OCI-LY7 (cell line): ENCODE measurements at regions of chr20 and their contacts with region 1.

Region 1: DNA sequence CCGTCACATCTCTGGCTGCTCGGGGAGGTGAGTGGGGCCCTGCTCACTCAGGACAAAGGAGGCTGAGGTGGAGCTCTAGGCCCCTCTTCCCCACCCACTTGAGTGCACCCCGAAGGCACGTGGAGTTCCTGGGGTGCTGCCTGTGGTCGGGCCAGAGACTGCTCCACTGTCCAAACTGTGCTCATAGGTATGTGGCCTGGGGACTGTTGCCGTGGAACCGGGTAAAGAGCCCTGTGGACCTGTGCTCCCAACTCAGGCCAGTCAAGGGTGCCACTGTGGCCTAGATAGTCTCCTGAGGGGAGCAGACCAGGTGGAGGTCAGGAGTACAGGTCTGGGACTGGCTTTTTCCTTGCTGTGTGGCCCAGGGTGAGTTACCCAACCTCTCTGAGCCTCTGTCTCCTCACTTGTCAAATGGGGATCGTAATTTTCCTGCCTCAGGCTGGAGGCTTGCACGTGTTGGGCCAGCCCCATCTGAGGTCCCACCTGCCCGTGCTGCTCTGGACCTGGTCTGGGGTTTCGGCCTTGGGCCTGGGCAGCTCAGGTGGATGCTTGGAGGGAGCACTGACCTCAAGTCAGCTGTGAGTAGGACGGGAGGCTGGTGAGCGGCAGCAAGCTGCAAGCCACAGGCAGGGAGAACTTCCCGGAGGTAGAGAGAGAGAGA is 12.4 kb upstream of the NPBWR2 start:
- DNase-seq: peak; percentile 16
- H3K4me3 ChIP-seq: peak overlapping the region; percentile 29
- H3K27ac ChIP-seq: peak overlapping the region; percentile 9
- H3K4me1 ChIP-seq: peaks cover 11% of the 10 kb centered on the region
- CTCF ChIP-seq: no peak

Region 2: GRCh38 chr20:63980806-63981728 is 138.7 kb before region 1 on chr20 and contains the start of gene PRPF6:
- CTCF ChIA-PET with region 1: interaction called, 3 read pairs
- POLR2A ChIA-PET with region 1: no interaction called
- intact Hi-C with region 1: loop called (anchors 1 kb)
- DNase-seq: peak; percentile 99
- H3K4me3 ChIP-seq: peak within 1 kb of the TSS; percentile 82
- H3K27ac ChIP-seq: peak within 1 kb of the TSS; percentile 89
- H3K4me1 ChIP-seq: peaks cover 35% of the 10 kb centered on the region
- CTCF ChIP-seq: peak; percentile 86
- total RNA-seq, gene PRPF6: 45.1 and 61.5 TPM in 2 replicates

Region 3: DNA sequence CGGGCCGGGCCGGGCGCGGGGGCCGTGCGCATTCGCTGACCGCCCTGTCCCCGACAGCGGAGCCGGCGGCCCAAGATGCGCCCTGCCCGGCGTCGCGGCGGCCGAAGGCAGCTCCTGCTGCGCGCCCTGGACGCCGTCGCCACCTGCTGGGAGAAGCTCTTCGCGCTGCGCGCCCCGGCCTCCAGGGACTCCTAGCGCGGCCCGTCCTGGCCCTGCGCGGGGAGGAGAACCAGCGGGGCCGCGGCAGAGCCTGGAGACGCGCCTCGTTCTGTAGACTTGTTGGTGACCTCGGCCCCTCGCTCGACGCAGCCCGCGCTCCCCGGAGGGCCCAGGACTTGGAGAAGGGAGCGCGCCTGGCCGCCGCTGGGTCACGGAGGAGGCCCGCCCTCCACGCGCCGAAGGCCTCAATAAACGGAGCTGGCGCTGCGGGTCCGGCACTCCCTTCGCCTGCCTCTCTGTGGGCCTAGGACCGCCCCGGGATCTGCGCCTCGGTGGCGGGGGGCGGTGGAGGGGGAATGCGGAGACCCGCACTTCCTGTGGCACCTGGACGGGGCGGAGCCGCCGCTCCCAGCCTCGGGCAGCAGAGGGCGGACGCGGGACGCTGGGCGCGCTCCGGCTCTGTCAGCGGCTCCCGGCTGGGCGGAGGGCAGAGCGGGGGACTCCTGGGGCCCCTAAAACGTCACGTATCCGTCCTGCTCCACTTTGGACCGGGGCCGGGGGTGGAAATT is 81.1 kb before region 1 on chr20:
- CTCF ChIA-PET with region 1: interaction called, 3 read pairs
- POLR2A ChIA-PET with region 1: no interaction called
- intact Hi-C with region 1: loop called (anchors 1 kb)
- DNase-seq: peak; percentile 80
- H3K4me3 ChIP-seq: peak overlapping the region; percentile 63
- H3K27ac ChIP-seq: no peak overlapping the region
- H3K4me1 ChIP-seq: peaks cover 45% of the 10 kb centered on the region
- CTCF ChIP-seq: peak; percentile 73

Region 4: DNA sequence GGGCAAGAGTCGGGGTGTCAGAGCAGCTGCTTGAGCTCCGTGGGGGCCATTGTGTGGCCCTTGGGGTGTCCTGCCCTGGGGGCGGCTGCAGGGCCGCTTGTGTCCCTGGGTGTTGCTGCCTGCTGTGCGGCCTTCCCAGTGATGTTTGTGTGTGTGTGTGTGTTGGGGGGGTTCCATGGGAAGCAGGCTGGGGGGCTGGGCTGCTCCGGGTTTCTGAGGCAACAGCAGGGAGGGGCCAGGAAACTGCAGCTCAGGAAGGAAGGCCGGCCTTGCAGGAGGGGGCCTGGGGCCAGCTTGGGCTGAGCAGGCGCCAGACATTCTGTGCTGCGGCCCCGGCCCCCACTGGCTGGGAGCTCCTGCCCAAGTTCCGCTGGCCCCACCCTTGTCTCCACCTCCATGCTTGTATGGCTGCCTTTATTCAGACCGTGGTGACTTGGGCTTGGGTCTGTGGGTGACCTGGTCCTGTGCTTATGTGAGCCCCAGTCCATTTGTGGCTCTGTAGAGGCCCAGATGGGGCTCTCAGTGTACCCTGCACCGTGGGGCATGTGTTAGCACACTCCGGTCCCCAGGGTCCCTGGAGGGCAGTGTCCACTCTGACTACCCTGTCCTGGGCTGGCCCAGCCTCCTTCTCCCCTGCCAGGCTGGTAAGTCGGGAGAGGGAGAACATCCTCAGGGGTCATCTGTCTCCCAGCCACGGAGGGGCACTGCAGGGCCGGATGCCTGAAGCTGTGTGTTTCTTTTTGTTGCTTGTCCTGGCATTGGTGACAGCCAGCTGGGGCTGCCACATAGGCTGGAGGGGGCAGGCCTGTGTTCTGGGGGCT is 65.8 kb before region 1 on chr20:
- CTCF ChIA-PET with region 1: interaction called, 3 read pairs
- POLR2A ChIA-PET with region 1: interaction called, 3 read pairs
- intact Hi-C with region 1: loop called (anchors 1 kb)
- DNase-seq: peak; percentile 69
- H3K4me3 ChIP-seq: no peak overlapping the region
- H3K27ac ChIP-seq: no peak overlapping the region
- H3K4me1 ChIP-seq: peaks cover 14% of the 10 kb centered on the region
- CTCF ChIP-seq: peak; percentile 72

Region 5: DNA sequence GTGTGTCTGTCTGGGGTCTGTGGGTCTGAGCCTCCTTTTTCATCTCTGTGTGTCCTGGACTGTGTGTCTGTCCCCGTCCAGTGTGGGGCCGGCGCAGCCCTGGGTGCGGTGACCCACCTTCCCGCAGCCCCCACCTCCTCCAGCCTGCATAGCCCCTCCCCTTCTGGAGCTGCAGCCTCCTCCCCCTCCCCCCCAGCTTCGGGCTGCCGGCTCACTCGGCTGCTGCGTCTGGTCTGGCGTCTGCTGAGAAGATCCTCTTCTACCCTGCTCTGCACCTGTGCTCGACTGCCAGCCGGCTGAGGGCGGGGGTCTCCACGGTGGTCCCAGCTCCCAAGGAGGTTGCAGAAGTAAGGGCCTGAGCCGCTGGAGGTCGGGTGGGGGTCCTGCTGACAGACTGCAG is 28.0 kb before region 1 on chr20:
- CTCF ChIA-PET with region 1: no interaction called
- POLR2A ChIA-PET with region 1: no interaction called
- intact Hi-C with region 1: no loop called
- DNase-seq: no peak
- H3K4me3 ChIP-seq: no peak overlapping the region
- H3K27ac ChIP-seq: no peak overlapping the region
- H3K4me1 ChIP-seq: peaks cover 4% of the 10 kb centered on the region
- CTCF ChIP-seq: no peak